Activated CD4-positive, alpha-beta T cell treated with anti-CD3 and anti-CD28 coated beads for 36 hours (primary cell): ENCODE measurements at regions of chr2 and their contacts with region 1.

Region 1: GRCh38 chr2:219155054-219155644 is 5.5 kb downstream of the NHEJ1 start:
- DNase-seq: peak; percentile 47
- ATAC-seq: peak; percentile 47
- H3K4me3 Mint-ChIP-seq: no peak overlapping the region
- H3K27ac Mint-ChIP-seq: no peak overlapping the region
- H3K4me1 Mint-ChIP-seq: peaks cover 6% of the 10 kb centered on the region
- H3K27me3 Mint-ChIP-seq: no peaks in the 10 kb centered on the region

Region 2: GRCh38 chr2:217880287-217880889 is 1274.8 kb before region 1 on chr2:
- CTCF ChIA-PET with region 1: no interaction called
- POLR2A ChIA-PET with region 1: no interaction called
- intact Hi-C with region 1: no loop called
- DNase-seq: no peak
- ATAC-seq: no peak
- H3K4me3 Mint-ChIP-seq: no peak overlapping the region
- H3K27ac Mint-ChIP-seq: no peak overlapping the region
- H3K4me1 Mint-ChIP-seq: no peaks in the 10 kb centered on the region
- H3K27me3 Mint-ChIP-seq: peaks cover 2% of the 10 kb centered on the region

Region 3: GRCh38 chr2:218010140-218010983 is 1144.8 kb before region 1 on chr2:
- CTCF ChIA-PET with region 1: no interaction called
- POLR2A ChIA-PET with region 1: no interaction called
- intact Hi-C with region 1: no loop called
- DNase-seq: peak; percentile 48
- ATAC-seq: peak; percentile 78
- H3K4me3 Mint-ChIP-seq: peak overlapping the region; percentile 50
- H3K27ac Mint-ChIP-seq: no peak overlapping the region
- H3K4me1 Mint-ChIP-seq: peaks cover 10% of the 10 kb centered on the region
- H3K27me3 Mint-ChIP-seq: peaks cover 34% of the 10 kb centered on the region

Region 4: GRCh38 chr2:218944759-218945404 is 210.3 kb before region 1 on chr2:
- CTCF ChIA-PET with region 1: no interaction called
- POLR2A ChIA-PET with region 1: no interaction called
- intact Hi-C with region 1: no loop called
- DNase-seq: no peak
- ATAC-seq: no peak
- H3K4me3 Mint-ChIP-seq: no peak overlapping the region
- H3K27ac Mint-ChIP-seq: no peak overlapping the region
- H3K4me1 Mint-ChIP-seq: no peaks in the 10 kb centered on the region
- H3K27me3 Mint-ChIP-seq: peaks cover 35% of the 10 kb centered on the region

Region 5: GRCh38 chr2:218995972-218996711 is 159.0 kb before region 1 on chr2:
- CTCF ChIA-PET with region 1: interaction called, 18 read pairs
- POLR2A ChIA-PET with region 1: no interaction called
- intact Hi-C with region 1: no loop called
- DNase-seq: peak; percentile 91
- ATAC-seq: peak; percentile 81
- H3K4me3 Mint-ChIP-seq: no peak overlapping the region
- H3K27ac Mint-ChIP-seq: no peak overlapping the region
- H3K4me1 Mint-ChIP-seq: no peaks in the 10 kb centered on the region
- H3K27me3 Mint-ChIP-seq: peaks cover 69% of the 10 kb centered on the region

Region 6: DNA sequence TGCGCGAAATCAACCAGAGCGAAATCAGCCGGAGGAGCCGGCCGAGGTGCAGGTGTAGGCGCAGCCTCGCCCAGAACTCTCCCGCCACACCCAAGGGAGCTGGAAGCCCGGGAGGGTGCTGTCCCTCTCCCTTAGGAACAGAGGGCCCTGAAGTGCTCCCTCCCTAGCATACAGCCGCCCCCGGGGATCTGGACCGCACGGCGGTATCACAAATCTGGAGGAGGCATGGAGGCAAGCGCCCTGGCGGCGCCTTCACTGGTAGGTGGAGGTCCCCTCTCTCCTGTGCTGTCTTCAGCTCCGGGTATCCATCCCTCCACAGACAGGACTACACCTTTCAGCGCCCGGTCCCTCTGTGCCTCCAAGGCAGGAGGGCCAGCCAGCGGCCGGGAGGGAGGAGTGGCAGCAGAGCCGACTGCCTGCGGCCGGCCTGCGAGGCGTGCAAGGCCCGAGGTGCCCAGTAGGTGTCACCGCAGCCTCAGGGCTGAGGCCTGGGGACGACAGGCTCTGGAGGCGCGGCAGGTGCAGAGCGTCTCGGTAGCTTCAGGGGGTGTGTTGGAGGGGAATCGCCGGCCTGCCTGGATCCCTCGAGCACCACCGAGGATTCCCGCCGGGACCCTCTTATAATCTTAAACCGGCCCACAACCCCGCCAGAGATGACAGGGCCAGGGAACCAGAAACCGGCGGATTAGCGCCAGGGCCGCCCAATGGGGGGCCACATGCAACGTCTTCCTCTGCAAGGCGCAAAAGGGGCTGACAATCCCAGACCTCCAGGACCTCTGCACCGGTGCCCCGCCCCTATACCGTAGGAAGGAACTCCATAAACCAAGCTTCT is 97.2 kb before region 1 on chr2:
- CTCF ChIA-PET with region 1: interaction called, 125 read pairs
- POLR2A ChIA-PET with region 1: no interaction called
- intact Hi-C with region 1: loop called (anchors 1 kb)
- DNase-seq: peak; percentile 90
- ATAC-seq: peak; percentile 97
- H3K4me3 Mint-ChIP-seq: no peak overlapping the region
- H3K27ac Mint-ChIP-seq: no peak overlapping the region
- H3K4me1 Mint-ChIP-seq: peaks cover 19% of the 10 kb centered on the region
- H3K27me3 Mint-ChIP-seq: peaks cover 56% of the 10 kb centered on the region

Region 7: GRCh38 chr2:219119422-219120043 is 35.6 kb before region 1 on chr2:
- CTCF ChIA-PET with region 1: interaction called, 13 read pairs
- POLR2A ChIA-PET with region 1: no interaction called
- intact Hi-C with region 1: no loop called
- DNase-seq: peak; percentile 82
- ATAC-seq: peak; percentile 72
- H3K4me3 Mint-ChIP-seq: no peak overlapping the region
- H3K27ac Mint-ChIP-seq: no peak overlapping the region
- H3K4me1 Mint-ChIP-seq: peaks cover 6% of the 10 kb centered on the region
- H3K27me3 Mint-ChIP-seq: no peaks in the 10 kb centered on the region

Region 8: DNA sequence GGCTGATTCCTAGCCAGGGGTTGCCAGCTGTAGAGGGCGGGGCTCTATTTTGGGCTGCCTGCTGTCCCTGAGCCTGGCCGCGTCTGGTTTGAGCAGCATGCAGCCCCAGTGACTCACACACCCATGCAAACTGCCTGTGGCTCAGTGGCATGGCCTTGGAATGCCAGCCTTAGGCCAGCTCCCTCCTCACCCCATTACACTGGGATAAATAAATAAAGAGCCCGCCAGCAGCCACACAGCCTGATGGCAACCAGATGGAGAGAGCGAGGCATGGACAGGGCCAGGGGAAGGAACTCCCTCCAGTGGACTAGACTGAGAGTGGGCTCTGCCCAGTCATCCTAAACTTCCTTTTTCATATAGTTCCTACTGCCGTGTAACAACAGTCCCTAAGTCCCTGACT is 12.8 kb before region 1 on chr2:
- CTCF ChIA-PET with region 1: interaction called, 19 read pairs
- POLR2A ChIA-PET with region 1: no interaction called
- intact Hi-C with region 1: no loop called
- DNase-seq: no peak
- ATAC-seq: no peak
- H3K4me3 Mint-ChIP-seq: no peak overlapping the region
- H3K27ac Mint-ChIP-seq: no peak overlapping the region
- H3K4me1 Mint-ChIP-seq: no peaks in the 10 kb centered on the region
- H3K27me3 Mint-ChIP-seq: no peaks in the 10 kb centered on the region

Region 9: DNA sequence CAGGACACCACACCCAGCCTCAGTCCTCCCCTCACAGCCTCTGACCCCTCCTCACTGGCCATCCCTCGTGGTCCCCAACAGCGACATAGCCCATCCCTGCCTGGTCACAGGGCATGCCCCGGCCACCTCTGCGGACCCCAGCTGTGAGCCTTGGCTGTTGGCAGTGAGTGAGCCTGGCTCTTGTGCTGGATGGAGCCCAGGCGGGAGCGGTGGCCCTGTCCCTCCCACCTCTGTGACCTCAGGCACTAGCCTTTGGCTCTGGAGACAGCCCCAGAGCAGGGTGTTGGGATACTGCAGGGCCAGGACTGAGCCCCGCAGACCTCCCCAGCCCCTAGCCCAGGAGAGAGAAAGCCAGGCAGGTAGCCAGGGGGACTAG is 270.9 kb after region 1 on chr2:
- CTCF ChIA-PET with region 1: no interaction called
- POLR2A ChIA-PET with region 1: no interaction called
- intact Hi-C with region 1: no loop called
- DNase-seq: no peak
- ATAC-seq: no peak
- H3K4me3 Mint-ChIP-seq: no peak overlapping the region
- H3K27ac Mint-ChIP-seq: no peak overlapping the region
- H3K4me1 Mint-ChIP-seq: no peaks in the 10 kb centered on the region
- H3K27me3 Mint-ChIP-seq: peaks cover 7% of the 10 kb centered on the region